Activated T-helper 2 cell treated with anti-CD3 and anti-CD28 coated beads, Interferon-gamma antibody, Interleukin-2, Interleukin-4, amounts not matched to agents 10 μg/mL and 5 μg/mL and 100 μg/mL, durations not matched to agents 14 hours and 24 hours and 36 hours (primary cell): ENCODE measurements at regions of chr9 and their contacts with region 1.

Region 1: DNA sequence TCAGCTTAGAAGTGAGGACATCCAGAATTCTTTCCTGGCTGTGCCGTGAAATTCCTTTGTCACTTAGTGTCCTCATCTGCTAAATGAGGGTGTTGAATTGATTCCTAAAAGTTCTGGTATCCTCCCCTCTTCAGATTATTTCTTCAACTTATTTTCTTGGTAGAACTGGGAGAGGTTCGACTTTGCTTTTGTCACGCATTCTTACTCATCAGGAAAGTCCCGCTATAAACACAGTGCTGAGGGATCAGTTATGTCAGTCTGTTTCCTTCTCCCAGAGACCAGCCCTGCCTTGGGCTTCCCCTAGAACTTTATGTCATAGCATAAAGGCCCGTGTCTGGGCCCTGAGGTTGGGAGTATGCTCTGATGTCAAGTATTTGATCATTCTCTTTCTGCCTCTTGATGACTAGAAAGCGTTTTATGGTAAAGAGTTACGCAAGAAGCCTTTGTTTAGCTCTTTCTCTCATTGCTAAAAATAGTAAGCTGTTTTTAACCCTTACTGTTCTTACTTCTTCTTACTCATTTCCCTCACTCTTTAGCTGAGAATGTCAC is 29.6 kb downstream of the MTAP start:
- DNase-seq: peak; percentile 26
- H3K4me3 Mint-ChIP-seq: no peak overlapping the region
- H3K27ac Mint-ChIP-seq: peak overlapping the region; percentile 11
- H3K4me1 Mint-ChIP-seq: peaks cover 39% of the 10 kb centered on the region
- H3K27me3 Mint-ChIP-seq: no peaks in the 10 kb centered on the region

Region 2: GRCh38 chr9:21852754-21853153 is 20.7 kb after region 1 on chr9:
- intact Hi-C with region 1: loop called (anchors 1 kb)
- DNase-seq: no peak
- H3K4me3 Mint-ChIP-seq: no peak overlapping the region
- H3K27ac Mint-ChIP-seq: no peak overlapping the region
- H3K4me1 Mint-ChIP-seq: peaks cover 12% of the 10 kb centered on the region
- H3K27me3 Mint-ChIP-seq: no peaks in the 10 kb centered on the region